Psoas muscle (tissue), 8 donors: ENCODE measurements at regions of chr3 and their contacts with region 1.

Region 1: DNA sequence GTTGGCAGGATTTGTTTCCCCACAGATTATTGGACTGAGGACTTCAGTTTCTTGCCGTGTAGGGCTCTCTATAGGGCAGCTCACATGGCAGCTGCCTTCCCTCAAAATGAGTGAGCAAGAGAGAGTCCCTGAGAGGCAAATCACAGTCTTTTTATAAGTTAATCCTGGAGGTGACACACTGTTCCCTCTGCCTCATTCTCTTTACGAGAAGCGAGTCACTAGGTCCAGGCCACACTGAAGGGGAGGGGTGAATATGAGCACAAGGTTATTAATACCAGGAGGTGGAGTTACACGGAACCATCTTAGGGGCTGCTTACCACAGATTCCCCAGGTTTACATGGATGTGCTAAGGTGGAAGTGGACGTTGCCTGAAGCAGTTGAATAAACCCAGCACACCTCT is 77.0 kb downstream of the LPP start:
- DNase-seq: peak; percentile 36 to 66
- ATAC-seq: peak; percentile 94 to 97 (median 96)
- H3K4me3 ChIP-seq: no peak overlapping the region
- H3K27ac ChIP-seq: peak overlapping the region; percentile 85
- H3K4me1 ChIP-seq: peaks cover 50% of the 10 kb centered on the region
- H3K27me3 ChIP-seq: no peaks in the 10 kb centered on the region
- CTCF ChIP-seq: no peak

Region 2: GRCh38 chr3:188185717-188186251 is 45.2 kb before region 1 on chr3:
- intact Hi-C with region 1: loop called in 1 of 2 experiments (anchors 2 kb)
- DNase-seq: peak; percentile 30 to 71
- ATAC-seq: peak; percentile 84 to 90 (median 88)
- H3K4me3 ChIP-seq: peak overlapping the region; percentile 35
- H3K27ac ChIP-seq: peak overlapping the region; percentile 92
- H3K4me1 ChIP-seq: peaks cover 70% of the 10 kb centered on the region
- H3K27me3 ChIP-seq: no peaks in the 10 kb centered on the region
- CTCF ChIP-seq: no peak

Region 3: DNA sequence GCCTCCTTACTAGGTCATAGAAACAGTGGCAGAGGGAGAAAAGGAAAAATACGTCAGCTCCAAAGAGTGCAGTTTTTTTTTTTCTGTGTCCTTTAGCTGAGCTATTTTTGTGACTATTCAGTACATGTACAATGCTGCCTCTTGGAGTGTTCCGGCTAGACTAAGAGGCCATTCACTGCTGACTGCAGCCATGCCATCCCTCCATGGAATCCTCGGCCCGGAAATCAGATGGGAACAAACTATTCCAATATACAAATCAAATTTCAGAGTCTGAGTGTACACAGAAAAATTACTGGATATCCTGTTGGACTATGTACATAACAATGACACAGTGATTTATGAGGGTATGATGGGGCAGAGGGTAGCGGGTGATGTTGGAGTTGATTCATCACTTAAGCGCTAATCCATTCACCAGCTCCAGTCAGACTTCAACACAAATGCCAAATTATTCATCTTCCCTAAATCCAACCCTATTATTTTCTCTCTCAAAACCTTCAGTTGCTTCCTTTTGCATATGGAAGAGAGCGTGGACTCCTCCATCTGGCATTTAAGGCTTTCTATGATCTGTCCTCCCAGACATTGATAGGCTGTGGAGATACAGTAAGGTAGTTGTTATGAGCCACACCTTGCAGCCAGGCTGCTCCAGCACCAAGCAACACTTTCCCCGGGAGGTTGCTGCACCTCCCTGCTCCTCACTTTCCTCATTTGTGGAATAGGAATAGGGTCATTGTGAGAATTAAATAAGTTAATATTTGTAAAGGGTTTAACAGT is 32.1 kb after region 1 on chr3:
- intact Hi-C with region 1: loop called in 1 of 2 experiments (anchors 5 kb)
- DNase-seq: peak in 1 of 2 donors; percentile 74
- ATAC-seq: peak; percentile 41 to 67 (median 56)
- H3K4me3 ChIP-seq: no peak overlapping the region
- H3K27ac ChIP-seq: peak overlapping the region; percentile 98
- H3K4me1 ChIP-seq: peaks cover 75% of the 10 kb centered on the region
- H3K27me3 ChIP-seq: no peaks in the 10 kb centered on the region
- CTCF ChIP-seq: no peak